Natural killer cell (primary cell): ENCODE measurements at regions of chrX and their contacts with region 1.

Region 1: GRCh38 chrX:45515262-45516215 is 314.9 kb upstream of the DIPK2B start:
- DNase-seq: peak in 1 of 2 donors; percentile 66
- ATAC-seq: peak in 1 of 3 donors; percentile 55
- H3K4me3 ChIP-seq: no peak overlapping the region
- H3K4me3 Mint-ChIP-seq: no peak overlapping the region
- H3K27ac ChIP-seq: no peak overlapping the region
- H3K27ac Mint-ChIP-seq: no peak overlapping the region
- H3K4me1 ChIP-seq: no peaks in the 10 kb centered on the region
- H3K4me1 Mint-ChIP-seq: no peaks in the 10 kb centered on the region
- H3K27me3 ChIP-seq: no peaks in the 10 kb centered on the region
- H3K27me3 Mint-ChIP-seq: peaks cover 3 to 29% of the 10 kb centered on the region in 2 donors
- CTCF ChIP-seq: peak; percentile 45

Region 2: DNA sequence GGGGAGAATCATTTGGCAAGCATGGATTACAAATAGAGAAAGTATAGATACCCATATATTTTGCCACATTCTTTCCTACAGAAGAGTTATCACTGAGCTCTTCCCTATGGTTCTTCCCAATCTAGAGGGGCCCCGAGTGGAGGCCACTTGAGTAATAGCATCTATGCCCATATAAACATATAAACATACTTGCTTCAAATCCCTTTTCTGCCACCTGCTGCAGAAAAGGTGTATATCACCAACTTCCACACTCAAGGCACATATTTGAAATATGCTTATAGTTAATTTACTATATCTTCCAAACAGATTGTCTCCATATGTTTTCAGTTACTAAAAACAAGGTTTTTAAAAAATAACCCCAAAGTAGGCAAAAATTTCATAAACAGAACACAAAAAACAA is 328.0 kb after region 1 on chrX:
- intact Hi-C with region 1: loop called (anchors 2 kb)
- DNase-seq: peak in 1 of 2 donors; percentile 56
- ATAC-seq: no peak
- H3K4me3 ChIP-seq: no peak overlapping the region
- H3K4me3 Mint-ChIP-seq: no peak overlapping the region
- H3K27ac ChIP-seq: no peak overlapping the region
- H3K27ac Mint-ChIP-seq: no peak overlapping the region
- H3K4me1 ChIP-seq: no peaks in the 10 kb centered on the region
- H3K4me1 Mint-ChIP-seq: no peaks in the 10 kb centered on the region
- H3K27me3 ChIP-seq: no peaks in the 10 kb centered on the region
- H3K27me3 Mint-ChIP-seq: no peaks in the 10 kb centered on the region
- CTCF ChIP-seq: peak; percentile 11

Region 3: GRCh38 chrX:46408553-46409407 is 893.2 kb after region 1 on chrX:
- intact Hi-C with region 1: loop called (anchors 5 kb)
- DNase-seq: peak; percentile 35 to 75
- ATAC-seq: peak in 1 of 3 donors; percentile 52
- H3K4me3 ChIP-seq: no peak overlapping the region
- H3K4me3 Mint-ChIP-seq: no peak overlapping the region
- H3K27ac ChIP-seq: no peak overlapping the region
- H3K27ac Mint-ChIP-seq: no peak overlapping the region
- H3K4me1 ChIP-seq: no peaks in the 10 kb centered on the region
- H3K4me1 Mint-ChIP-seq: no peaks in the 10 kb centered on the region
- H3K27me3 ChIP-seq: no peaks in the 10 kb centered on the region
- H3K27me3 Mint-ChIP-seq: no peaks in the 10 kb centered on the region
- CTCF ChIP-seq: peak; percentile 62